Head of caudate nucleus (tissue), 42 donors: ENCODE measurements at regions of chr1 and their contacts with region 1.

Region 1: DNA sequence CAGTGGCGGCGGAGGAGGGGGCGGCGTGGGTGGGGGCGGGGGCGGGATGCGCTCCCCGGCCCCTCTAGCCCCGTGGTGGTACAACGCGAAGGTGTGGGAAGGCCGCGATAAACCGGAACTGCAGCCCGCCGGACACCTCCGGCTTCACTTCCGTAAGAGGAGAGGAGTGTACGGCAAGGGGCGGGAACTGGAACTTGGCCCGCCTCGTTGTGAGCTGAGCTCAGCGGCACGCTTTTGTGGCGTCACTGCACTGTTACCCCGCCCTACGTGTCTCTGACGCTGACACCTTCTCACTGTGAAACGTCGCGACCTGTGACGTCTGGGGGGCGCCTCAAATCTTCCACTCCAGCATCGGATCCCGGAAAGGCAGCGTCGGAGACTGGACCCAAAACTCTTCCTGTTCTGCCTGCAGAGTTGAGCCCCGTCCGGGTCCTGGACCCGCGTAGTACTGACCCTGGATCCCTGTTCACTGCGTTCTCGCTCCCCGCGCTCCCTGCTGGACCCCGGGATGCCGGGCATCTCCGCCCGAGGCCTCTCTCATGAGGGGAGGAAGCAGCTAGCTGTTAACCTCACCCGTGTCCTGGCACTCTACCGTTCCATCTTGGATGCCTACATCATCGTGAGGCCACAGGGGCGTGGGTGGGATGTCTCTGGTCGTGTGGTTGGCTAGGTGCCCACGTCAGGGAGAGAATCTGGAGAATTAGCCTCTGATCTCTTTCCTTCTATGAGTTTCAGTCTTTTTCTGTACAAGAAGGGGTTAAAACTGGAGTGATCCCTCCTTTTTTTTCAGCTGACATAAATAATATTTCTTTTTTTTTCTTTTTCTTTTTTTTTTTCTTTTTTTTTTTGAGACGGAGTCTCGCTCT is at the start of gene ISG20L2:
- DNase-seq: peak; percentile 88 to 99 (median 95)

Region 2: GRCh38 chr1:156689035-156689952 is 39.5 kb before region 1 on chr1:
- intact Hi-C with region 1: loop called (anchors 5 kb)
- DNase-seq: peak; percentile 54 to 89 (median 76)

Region 3: DNA sequence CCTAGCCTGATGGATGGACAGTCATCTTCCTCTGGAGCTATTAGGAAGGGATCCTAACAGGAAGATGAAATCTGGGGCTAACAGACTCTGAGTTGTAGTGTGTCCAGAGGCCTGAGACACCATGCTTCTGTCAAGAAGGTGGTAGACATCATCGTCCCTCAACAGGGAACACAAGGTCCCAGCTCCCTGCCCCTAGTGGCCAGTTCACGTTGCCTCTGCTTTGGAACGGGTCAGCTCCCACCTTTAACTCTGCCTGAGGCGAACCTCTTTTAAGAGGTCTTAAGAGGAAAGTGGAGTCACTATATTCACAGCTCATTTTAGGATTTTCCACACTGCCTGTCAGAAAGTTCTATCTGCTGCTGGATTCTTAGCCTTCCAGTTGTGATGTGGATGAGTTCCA is 219.9 kb after region 1 on chr1:
- intact Hi-C with region 1: no loop called
- DNase-seq: no peak